HEK293 (cell line): ENCODE measurements at regions of chr9 and their contacts with region 1.

Region 1: GRCh38 chr9:108565651-108566378 is 290.0 kb downstream of the ACTL7B start:
- H3K4me3 ChIP-seq: no peak overlapping the region
- H3K27ac ChIP-seq: no peak overlapping the region
- H3K4me1 ChIP-seq: no peaks in the 10 kb centered on the region
- CTCF ChIP-seq: peak; percentile 60

Region 2: DNA sequence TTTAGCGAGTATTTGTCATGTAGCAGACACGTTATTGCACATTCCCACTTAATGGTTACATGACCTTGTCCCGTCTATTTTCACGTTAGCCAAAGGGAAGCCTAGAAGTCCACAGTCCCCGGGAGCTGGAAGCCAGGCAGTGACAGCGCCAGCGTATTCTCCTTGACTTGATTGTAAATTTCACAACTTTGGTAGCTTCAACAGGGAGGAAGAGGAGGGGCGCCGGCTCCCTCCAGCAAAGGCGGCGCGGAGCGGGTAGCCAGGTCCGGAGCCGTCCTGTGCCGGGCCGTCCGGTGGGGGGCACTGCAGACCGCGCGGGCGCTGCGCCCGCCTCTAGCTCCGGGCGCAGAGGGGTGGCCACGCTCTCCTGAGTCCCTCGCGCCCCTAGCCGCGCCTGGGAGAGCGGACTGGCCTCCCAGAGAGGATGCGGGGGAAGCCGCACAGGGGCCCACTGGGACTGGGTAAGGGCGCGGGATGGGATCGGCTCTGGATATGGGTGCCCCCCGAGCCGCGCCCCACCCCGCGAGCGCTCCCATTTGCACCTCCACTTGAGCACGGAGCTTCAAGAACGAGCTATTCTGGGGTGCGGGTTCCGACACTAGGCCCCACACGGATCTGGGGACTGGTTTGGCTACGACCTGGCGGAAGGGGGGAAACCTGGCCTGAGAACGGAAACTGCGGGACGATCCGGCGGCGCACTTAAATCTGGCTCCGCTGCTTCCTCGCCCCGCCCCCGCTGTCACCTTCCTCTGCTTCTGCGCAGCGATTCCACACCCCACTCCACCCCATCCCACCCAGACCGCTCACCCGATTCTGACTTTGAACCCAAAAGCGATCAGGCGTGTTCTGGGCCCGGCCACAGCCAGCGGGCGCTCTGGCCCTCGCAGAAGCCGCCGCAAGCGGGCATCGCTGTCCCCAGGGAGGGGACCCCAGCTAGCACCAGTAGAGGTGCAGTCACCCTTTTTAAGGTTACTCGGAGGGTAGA is 1100.1 kb before region 1 on chr9:
- CTCF ChIA-PET with region 1: interaction called, 15 read pairs
- POLR2A ChIA-PET with region 1: no interaction called
- H3K4me3 ChIP-seq: peak overlapping the region; percentile 17
- H3K27ac ChIP-seq: no peak overlapping the region
- H3K4me1 ChIP-seq: no peaks in the 10 kb centered on the region
- CTCF ChIP-seq: no peak

Region 3: DNA sequence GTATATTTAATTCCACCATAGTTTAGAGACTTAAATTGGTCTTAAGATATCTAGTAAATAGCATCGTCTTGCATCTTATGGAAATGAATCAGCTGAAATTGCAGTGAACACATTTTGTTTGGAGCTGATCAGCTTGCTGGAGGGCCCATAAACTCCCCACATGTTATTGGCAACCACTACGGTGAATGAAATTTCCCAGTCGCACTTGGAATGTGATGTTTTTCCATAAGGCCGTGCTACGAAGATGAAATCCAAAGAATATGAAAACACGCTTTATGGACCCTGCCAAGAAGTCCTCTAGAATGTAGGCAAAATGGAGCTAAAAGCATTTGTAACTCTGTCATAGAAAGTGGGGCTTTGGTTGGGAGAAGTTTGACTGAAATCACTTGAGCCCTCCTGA is 282.1 kb before region 1 on chr9:
- CTCF ChIA-PET with region 1: interaction called, 10 read pairs
- POLR2A ChIA-PET with region 1: no interaction called
- H3K4me3 ChIP-seq: no peak overlapping the region
- H3K27ac ChIP-seq: no peak overlapping the region
- H3K4me1 ChIP-seq: no peaks in the 10 kb centered on the region
- CTCF ChIP-seq: no peak

Region 4: DNA sequence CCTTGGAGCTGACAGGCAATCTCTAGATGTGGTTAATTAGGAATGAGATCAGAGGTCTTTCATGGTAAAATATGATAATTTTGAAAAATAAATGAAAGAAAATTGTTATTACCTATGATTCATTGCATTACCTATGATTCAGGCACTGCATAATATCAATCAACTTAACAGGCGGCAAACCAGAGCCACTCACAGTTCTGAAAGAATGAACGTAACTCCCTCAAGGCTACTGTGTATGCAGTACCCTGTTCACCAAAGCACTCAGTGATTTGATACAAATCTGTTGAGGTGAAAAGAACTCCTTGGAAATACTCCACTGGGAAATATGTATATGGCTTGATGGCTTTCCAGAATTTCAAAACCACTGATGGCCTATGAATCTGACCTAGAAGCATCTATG is 108.9 kb before region 1 on chr9:
- CTCF ChIA-PET with region 1: interaction called, 14 read pairs
- POLR2A ChIA-PET with region 1: no interaction called
- H3K4me3 ChIP-seq: no peak overlapping the region
- H3K27ac ChIP-seq: no peak overlapping the region
- H3K4me1 ChIP-seq: no peaks in the 10 kb centered on the region
- CTCF ChIP-seq: no peak

Region 5: DNA sequence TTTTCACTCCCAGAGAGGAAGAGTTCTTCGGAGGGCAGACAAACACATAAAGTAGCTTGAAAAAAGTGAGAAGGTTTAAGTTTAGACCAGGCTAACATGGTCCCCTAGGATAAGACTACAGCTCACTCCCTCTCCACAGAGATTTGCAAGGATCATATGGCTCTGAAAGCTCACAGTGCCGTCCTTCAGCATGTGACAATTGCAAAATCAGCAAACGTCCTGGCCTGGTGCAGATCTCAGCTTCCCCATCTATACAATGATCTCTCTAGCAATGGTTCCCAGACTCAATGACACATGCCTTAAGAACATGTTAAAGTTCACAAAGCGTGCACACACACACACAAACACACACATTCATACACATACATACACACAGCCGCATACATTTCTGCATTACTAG is 37.6 kb before region 1 on chr9:
- CTCF ChIA-PET with region 1: no interaction called
- POLR2A ChIA-PET with region 1: no interaction called
- H3K4me3 ChIP-seq: no peak overlapping the region
- H3K27ac ChIP-seq: no peak overlapping the region
- H3K4me1 ChIP-seq: no peaks in the 10 kb centered on the region
- CTCF ChIP-seq: no peak

Region 6: DNA sequence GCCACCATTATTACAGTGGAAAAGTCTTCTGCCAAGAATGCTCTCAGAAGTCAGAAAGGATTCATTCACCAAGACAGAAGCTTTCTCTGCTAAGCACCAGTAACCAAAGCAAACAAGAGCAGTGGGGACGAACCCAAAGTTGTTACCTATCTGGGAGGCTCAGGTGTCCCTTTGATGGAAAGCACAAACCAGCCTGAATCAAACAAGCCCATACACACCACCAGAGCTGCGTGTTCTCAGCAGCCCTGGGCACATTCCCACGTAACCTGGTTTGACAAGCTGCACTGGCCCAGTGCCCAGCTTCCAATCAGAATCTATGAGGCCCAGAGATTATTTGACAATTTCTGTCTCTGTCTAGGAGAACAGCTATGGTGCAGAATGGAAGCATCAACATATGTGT is 37.3 kb after region 1 on chr9:
- CTCF ChIA-PET with region 1: no interaction called
- POLR2A ChIA-PET with region 1: no interaction called
- H3K4me3 ChIP-seq: no peak overlapping the region
- H3K27ac ChIP-seq: no peak overlapping the region
- H3K4me1 ChIP-seq: no peaks in the 10 kb centered on the region
- CTCF ChIP-seq: no peak

Region 7: DNA sequence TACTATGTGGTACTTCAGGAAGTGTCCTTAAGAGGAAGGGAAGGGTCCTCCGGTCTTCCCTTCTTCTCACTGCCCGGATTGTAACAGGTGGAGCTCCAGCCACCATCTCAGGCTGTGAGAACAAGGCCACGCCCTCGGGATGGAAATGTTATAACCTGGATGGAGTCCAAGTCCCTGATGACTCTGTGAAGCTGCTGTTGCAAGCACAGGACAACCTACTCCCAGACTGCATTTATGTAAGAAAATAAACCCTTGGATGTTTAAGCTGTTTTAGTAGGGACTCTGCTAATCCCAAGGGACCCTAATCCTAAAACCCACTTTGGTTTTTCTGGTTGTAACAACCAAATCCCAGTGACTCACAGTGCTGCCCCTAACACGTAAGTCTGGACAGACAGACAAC is 68.4 kb after region 1 on chr9:
- CTCF ChIA-PET with region 1: no interaction called
- POLR2A ChIA-PET with region 1: no interaction called
- H3K4me3 ChIP-seq: no peak overlapping the region
- H3K27ac ChIP-seq: no peak overlapping the region
- H3K4me1 ChIP-seq: no peaks in the 10 kb centered on the region
- CTCF ChIP-seq: no peak

Region 8: DNA sequence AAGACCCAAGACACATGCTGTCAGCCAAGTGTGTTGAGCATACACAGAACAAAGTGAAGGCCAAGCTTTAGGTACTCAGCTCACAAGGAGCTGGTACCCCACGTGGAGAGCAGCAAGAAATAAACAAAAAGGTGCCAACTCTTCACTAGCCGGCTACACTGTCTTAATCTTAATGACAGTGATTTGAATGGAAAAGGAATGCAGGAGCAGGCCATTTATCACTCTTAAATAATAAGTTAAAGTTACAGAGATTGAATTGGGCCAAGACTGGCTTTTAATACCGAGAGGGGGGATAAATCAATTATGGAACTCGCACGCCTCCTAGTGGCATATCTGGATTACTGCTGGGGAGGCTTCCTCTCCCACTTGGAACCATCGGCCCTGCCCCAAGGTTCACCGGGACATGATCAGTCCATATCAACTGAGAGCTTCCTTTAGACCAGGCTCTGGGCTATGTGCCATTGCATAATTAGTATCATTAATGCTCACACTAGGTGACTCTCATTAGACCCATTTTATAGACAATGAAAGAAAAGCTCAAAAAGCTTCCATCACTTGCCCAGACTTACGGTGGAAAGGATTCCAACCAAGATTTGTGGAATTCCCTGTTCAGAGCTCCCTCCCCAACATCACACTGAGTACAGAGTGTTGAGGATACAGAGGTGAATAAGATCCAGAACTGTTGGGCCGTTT is 196.0 kb after region 1 on chr9:
- CTCF ChIA-PET with region 1: interaction called, 27 read pairs
- POLR2A ChIA-PET with region 1: no interaction called
- H3K4me3 ChIP-seq: no peak overlapping the region
- H3K27ac ChIP-seq: no peak overlapping the region
- H3K4me1 ChIP-seq: no peaks in the 10 kb centered on the region
- CTCF ChIP-seq: no peak